GM13976 (cell line): ENCODE measurements at regions of chr14 and their contacts with region 1.

Region 1: DNA sequence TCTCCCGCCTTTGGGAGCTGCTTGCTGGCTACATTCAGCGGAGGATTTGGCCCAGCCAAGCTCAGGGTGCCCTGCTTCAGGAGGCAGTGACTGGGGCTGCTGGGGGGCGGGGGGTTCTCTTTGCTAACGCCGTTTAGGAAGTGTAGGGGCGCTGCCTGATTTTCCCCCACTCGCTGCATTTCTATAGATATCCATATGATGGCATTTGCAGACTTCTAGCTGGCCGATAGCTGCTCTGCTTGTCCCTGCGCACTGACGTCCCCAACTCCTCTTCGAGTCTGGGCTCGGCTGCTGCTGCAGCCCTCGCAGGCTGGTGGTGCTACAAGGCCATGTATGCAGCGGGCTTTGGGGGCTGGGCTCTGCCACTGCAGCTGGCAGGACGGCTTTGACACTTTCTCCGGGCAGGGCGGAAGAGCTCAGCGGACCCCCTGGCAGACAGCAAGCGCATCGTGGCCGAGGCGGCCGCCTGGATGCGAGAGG is 3.1 kb downstream of the LRFN5 start:
- DNase-seq: no peak
- CTCF ChIP-seq: no peak

Region 2: GRCh38 chr14:39946807-39947206 is 1662.9 kb before region 1 on chr14:
- in situ Hi-C with region 1: loop called (anchors 25 kb)
- DNase-seq: no peak
- CTCF ChIP-seq: no peak

Region 3: DNA sequence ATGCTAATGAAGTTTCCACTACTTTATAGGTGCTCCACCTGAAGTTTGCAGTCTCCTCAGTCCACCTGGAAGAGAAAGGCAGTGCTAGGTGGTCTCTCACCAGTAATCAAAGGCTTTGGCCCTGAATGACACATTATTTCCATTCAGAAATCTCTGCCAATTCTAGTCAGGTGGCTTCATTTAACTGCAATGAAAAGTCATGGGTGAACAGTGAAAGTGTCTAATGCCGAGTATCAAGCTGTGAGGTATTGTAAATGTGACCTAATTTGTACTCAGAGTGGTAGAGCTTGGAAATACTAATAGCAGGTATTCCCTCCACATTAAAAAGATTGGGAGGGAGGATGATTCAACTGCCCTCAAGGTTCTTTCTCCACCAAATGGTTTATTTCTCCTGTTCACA is 223.9 kb before region 1 on chr14:
- in situ Hi-C with region 1: no loop called
- DNase-seq: no peak
- CTCF ChIP-seq: no peak

Region 4: GRCh38 chr14:41404126-41404525 is 205.6 kb before region 1 on chr14:
- in situ Hi-C with region 1: no loop called
- DNase-seq: no peak
- CTCF ChIP-seq: no peak

Region 5: DNA sequence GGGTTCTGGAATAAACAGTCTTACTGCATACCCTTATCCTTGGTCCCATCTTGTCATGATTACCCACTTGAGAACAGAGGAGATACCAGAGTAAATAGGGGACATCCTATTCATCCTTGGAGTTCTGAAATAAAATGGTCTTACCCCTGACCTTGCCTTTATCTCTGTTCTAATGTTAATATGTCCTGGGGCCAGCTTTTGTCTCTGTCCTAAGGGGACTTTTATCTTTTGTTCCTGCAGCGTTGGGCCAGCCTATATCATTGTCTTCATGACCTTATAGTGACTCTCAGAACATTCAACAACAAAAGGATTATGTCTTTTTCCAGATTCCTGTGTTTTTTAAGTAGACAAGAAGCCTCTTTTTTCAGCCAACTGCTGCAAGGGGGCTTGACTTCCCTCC is 1054.4 kb after region 1 on chr14:
- in situ Hi-C with region 1: no loop called
- DNase-seq: no peak
- CTCF ChIP-seq: no peak